ENCODE measurements at regions of chr16 and their contacts with region 1.

Region 1: GRCh38 chr16:20372701-20373100 is 20.2 kb upstream of the UMOD start:
- DNase-seq: no peak
- H3K4me3 ChIP-seq: no peak overlapping the region
- H3K27ac ChIP-seq: no peak overlapping the region
- H3K4me1 ChIP-seq: no peaks in the 10 kb centered on the region
- H3K27me3 ChIP-seq: no peaks in the 10 kb centered on the region; a peak in 1 of 7 replicates
- CTCF ChIP-seq: no peak
- EP300 ChIP-seq: no peak
- POLR2A ChIP-seq: no peak
- RAD21 ChIP-seq: no peak

Region 2: GRCh38 chr16:19898924-19899604 is 473.6 kb before region 1 on chr16:
- CTCF ChIA-PET with region 1: interaction called, 11 read pairs
- POLR2A ChIA-PET with region 1: no interaction called
- DNase-seq: peak in 1 of 2 experiments; percentile 86
- H3K4me3 ChIP-seq: no peak overlapping the region
- H3K27ac ChIP-seq: no peak overlapping the region; the same call in 1 of the 2 replicates
- H3K4me1 ChIP-seq: peaks cover 0 to 7% (median 4%) of the 10 kb centered on the region in 4 experiments; a peak in 5 of 7 replicates
- H3K27me3 ChIP-seq: no peaks in the 10 kb centered on the region
- CTCF ChIP-seq: peak; percentile 27 to 86 (median 73)
- EP300 ChIP-seq: no peak
- POLR2A ChIP-seq: no peak
- RAD21 ChIP-seq: peak; percentile 94 to 95

Region 3: GRCh38 chr16:20359997-20360396 is 12.7 kb before region 1 on chr16:
- CTCF ChIA-PET with region 1: interaction called, 10 read pairs
- POLR2A ChIA-PET with region 1: no interaction called
- DNase-seq: peak in 1 of 2 experiments; percentile 59
- H3K4me3 ChIP-seq: no peak overlapping the region
- H3K27ac ChIP-seq: no peak overlapping the region
- H3K4me1 ChIP-seq: no peaks in the 10 kb centered on the region
- H3K27me3 ChIP-seq: no peaks in the 10 kb centered on the region
- CTCF ChIP-seq: peak; percentile 57 to 71 (median 66)
- EP300 ChIP-seq: no peak
- POLR2A ChIP-seq: no peak
- RAD21 ChIP-seq: peak; percentile 53 to 64

Region 4: GRCh38 chr16:20399185-20399584 is 26.5 kb after region 1 on chr16:
- CTCF ChIA-PET with region 1: no interaction called
- POLR2A ChIA-PET with region 1: no interaction called
- DNase-seq: no peak
- H3K4me3 ChIP-seq: no peak overlapping the region
- H3K27ac ChIP-seq: no peak overlapping the region
- H3K4me1 ChIP-seq: peaks cover 0 to 1% (median 0%) of the 10 kb centered on the region in 4 experiments; a peak in 1 of 7 replicates
- H3K27me3 ChIP-seq: no peaks in the 10 kb centered on the region
- CTCF ChIP-seq: no peak
- EP300 ChIP-seq: no peak
- POLR2A ChIP-seq: no peak
- RAD21 ChIP-seq: no peak